Endothelial cell of umbilical vein (primary cell): ENCODE measurements at regions of chr5 and their contacts with region 1.

Region 1: GRCh38 chr5:180026320-180026719 is 45.2 kb downstream of the RNF130 start:
- DNase-seq: peak; percentile 89
- H3K4me3 ChIP-seq: no peak overlapping the region
- H3K27ac ChIP-seq: peak overlapping the region; percentile 14
- H3K4me1 ChIP-seq: peaks cover 20% of the 10 kb centered on the region
- H3K27me3 ChIP-seq: no peaks in the 10 kb centered on the region
- CTCF ChIP-seq: no peak
- POLR2A ChIP-seq: no peak

Region 2: GRCh38 chr5:179994583-179995323 is 31.6 kb before region 1 on chr5:
- CTCF ChIA-PET with region 1: no interaction called
- POLR2A ChIA-PET with region 1: no interaction called
- dilution Hi-C with region 1: no loop called
- intact Hi-C with region 1: no loop called
- DNase-seq: no peak
- H3K4me3 ChIP-seq: no peak overlapping the region
- H3K27ac ChIP-seq: no peak overlapping the region
- H3K4me1 ChIP-seq: no peaks in the 10 kb centered on the region
- H3K27me3 ChIP-seq: no peaks in the 10 kb centered on the region
- CTCF ChIP-seq: no peak
- POLR2A ChIP-seq: no peak

Region 3: DNA sequence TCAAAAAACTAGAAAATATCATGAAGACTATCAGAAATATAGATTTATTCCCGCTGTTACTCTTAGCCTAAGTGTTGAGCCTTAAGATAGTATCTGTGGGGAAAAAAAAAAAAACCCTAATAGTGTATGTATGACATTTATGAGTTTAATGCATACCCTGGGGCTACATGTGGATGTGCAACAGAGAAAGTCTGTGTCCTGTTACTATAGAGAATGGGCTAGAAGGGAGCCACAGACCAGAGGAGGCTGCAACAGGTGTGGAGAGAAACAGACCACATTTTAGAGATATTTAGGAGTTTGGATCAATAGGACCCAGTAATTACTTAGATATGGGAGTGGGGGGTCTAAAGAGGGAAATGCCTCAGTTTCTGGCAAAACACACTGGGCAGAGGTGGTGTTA is 29.8 kb after region 1 on chr5:
- CTCF ChIA-PET with region 1: no interaction called
- POLR2A ChIA-PET with region 1: no interaction called
- dilution Hi-C with region 1: no loop called
- intact Hi-C with region 1: loop called (anchors 2 kb)
- DNase-seq: no peak
- H3K4me3 ChIP-seq: no peak overlapping the region
- H3K27ac ChIP-seq: peak overlapping the region; percentile 68
- H3K4me1 ChIP-seq: peaks cover 18% of the 10 kb centered on the region
- H3K27me3 ChIP-seq: no peaks in the 10 kb centered on the region
- CTCF ChIP-seq: no peak
- POLR2A ChIP-seq: no peak

Region 4: DNA sequence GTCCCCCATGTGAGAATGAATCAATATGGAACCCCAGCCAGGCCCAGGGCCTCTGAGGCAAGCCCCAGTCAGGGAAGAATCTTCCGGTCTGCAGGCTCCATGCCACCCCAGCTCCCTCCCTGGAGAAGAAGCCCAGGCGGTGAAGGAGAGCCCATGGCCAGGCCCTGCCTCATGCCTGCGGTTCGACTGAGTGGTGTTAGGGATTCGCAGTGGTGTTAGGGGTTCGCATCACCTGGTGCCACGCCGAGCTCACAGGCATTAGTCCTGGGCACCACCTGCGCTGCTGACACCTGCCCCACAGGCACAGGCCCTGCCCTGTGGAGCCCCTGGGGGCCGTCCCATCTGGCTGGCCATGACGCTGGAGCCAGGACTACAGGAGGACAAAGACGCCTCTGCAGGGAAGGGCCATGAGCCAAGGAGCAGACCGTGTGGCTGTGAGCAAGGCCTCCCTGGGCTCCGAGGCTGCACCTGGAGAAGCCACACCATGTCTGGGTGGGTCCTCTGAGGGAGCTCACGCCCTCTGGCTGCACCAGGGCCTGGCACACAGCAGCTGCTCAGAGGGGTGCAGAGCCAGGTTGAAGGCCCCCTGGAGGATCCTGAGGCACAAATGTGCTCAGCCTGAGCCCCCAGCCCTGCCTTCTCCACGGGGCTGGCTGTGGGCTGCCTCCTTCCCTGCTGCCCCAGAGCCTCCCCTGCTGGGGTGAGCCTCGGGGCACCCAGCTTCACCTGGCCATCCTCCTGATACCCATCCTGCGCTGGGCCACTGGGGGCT is 72.8 kb after region 1 on chr5:
- CTCF ChIA-PET with region 1: no interaction called
- POLR2A ChIA-PET with region 1: no interaction called
- dilution Hi-C with region 1: no loop called
- intact Hi-C with region 1: no loop called
- DNase-seq: no peak
- H3K4me3 ChIP-seq: no peak overlapping the region
- H3K27ac ChIP-seq: no peak overlapping the region
- H3K4me1 ChIP-seq: no peaks in the 10 kb centered on the region
- H3K27me3 ChIP-seq: no peaks in the 10 kb centered on the region
- CTCF ChIP-seq: no peak
- POLR2A ChIP-seq: no peak